ENCODE measurements at regions of chr14 and their contacts with region 1.

Region 1: GRCh38 chr14:61730756-61731373 is 31.4 kb upstream of the SNAPC1 start:
- DNase-seq: no peak
- H3K4me3 Mint-ChIP-seq: peak overlapping the region; percentile 8
- H3K27ac Mint-ChIP-seq: peak overlapping the region; percentile 61
- H3K4me1 Mint-ChIP-seq: peaks cover 82% of the 10 kb centered on the region
- H3K27me3 Mint-ChIP-seq: no peaks in the 10 kb centered on the region

Region 2: DNA sequence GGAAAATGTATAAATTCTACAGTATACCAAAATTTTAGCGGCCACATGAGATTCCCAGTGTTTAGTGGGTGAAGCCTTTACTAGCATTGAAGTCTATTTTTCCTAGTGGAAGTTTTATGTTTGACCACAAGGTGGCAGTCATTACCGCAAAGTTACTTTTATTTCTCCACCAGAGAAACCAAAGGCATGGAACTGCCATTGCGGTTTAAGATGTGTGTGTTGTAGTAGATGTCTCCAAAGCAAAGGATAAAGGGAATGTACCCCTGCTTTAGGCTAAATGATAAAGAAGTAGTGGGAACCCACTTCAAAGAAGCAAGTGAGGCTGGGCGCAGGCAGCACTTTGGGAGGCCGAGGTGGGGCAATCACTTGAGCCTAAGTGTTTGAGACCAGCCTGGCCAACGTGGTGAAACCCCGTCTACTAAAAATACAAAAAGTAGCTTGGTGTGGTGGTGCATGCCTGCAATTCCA is 269.0 kb before region 1 on chr14:
- intact Hi-C with region 1: loop called (anchors 1 kb)
- DNase-seq: no peak
- H3K4me3 Mint-ChIP-seq: peak overlapping the region; percentile 15
- H3K27ac Mint-ChIP-seq: peak overlapping the region; percentile 65
- H3K4me1 Mint-ChIP-seq: peaks cover 51% of the 10 kb centered on the region
- H3K27me3 Mint-ChIP-seq: no peaks in the 10 kb centered on the region

Region 3: DNA sequence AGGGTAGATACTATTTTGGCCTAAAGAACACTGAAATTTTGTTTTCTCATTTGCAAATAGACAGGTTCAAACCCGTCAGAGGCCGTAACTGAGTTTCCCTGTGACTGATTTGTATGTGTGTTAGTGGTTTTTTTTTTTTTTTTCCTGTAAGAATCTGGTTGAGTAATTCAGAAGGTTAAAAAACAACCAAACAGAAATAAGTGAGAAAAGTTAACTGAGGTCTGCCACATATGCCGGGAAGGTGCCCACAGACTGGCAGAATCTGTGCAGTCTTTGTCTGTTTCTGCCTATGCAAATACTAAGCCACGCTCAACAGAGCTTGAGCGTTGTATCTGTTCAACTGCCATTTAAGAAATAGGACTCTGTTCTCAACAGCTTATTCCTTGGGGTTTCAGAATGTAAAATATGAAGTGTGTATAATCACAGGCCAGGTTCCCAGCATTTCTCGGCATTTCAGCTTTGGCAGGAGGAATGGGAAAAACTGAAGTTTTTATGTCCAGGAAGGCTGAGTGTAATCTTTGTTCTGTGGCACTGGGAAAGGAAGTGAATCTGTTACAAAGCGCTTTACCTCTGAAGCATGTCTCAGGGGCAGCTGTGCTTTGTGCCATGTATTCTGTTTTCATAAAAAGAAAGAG is 227.6 kb before region 1 on chr14:
- intact Hi-C with region 1: no loop called
- DNase-seq: peak; percentile 51
- H3K4me3 Mint-ChIP-seq: peak overlapping the region; percentile 76
- H3K27ac Mint-ChIP-seq: peak overlapping the region; percentile 99
- H3K4me1 Mint-ChIP-seq: peaks cover 94% of the 10 kb centered on the region
- H3K27me3 Mint-ChIP-seq: no peaks in the 10 kb centered on the region

Region 4: GRCh38 chr14:61598980-61599379 is 131.9 kb before region 1 on chr14:
- intact Hi-C with region 1: no loop called
- DNase-seq: peak; percentile 34
- H3K4me3 Mint-ChIP-seq: peak overlapping the region; percentile 45
- H3K27ac Mint-ChIP-seq: peak overlapping the region; percentile 85
- H3K4me1 Mint-ChIP-seq: peaks cover 73% of the 10 kb centered on the region
- H3K27me3 Mint-ChIP-seq: no peaks in the 10 kb centered on the region

Region 5: GRCh38 chr14:61620130-61620946 is 110.5 kb before region 1 on chr14:
- intact Hi-C with region 1: no loop called
- DNase-seq: no peak
- H3K4me3 Mint-ChIP-seq: no peak overlapping the region
- H3K27ac Mint-ChIP-seq: peak overlapping the region; percentile 31
- H3K4me1 Mint-ChIP-seq: peaks cover 54% of the 10 kb centered on the region
- H3K27me3 Mint-ChIP-seq: no peaks in the 10 kb centered on the region

Measured in activated T-helper 1 cell treated with anti-CD3 and anti-CD28 coated beads, Interleukin-12 subunit alpha, Interleukin-12 subunit beta, Interleukin-2, Interleukin-4 antibody, amounts not matched to agents 30 ng/mL and 10 ng/mL and 1 ng/mL, durations not matched to agents 14 hours and 24 hours and 36 hours (primary cell).